ENCODE measurements at regions of chr1 and their contacts with region 1.

Region 1: GRCh38 chr1:245605480-245606161 is 450.8 kb downstream of the KIF26B start:
- DNase-seq: peak; percentile 91
- H3K4me3 ChIP-seq: no peak overlapping the region; a peak in 2 of 4 replicates
- H3K27ac ChIP-seq: peak overlapping the region; percentile 71 to 100
- H3K4me1 ChIP-seq: peaks cover 12 to 78% of the 10 kb centered on the region in 2 experiments; a peak in 3 of 4 replicates
- H3K27me3 ChIP-seq: no peaks in the 10 kb centered on the region
- CTCF ChIP-seq: no peak
- EP300 ChIP-seq: peak; percentile 88 to 89
- RAD21 ChIP-seq: peak; percentile 49

Region 2: DNA sequence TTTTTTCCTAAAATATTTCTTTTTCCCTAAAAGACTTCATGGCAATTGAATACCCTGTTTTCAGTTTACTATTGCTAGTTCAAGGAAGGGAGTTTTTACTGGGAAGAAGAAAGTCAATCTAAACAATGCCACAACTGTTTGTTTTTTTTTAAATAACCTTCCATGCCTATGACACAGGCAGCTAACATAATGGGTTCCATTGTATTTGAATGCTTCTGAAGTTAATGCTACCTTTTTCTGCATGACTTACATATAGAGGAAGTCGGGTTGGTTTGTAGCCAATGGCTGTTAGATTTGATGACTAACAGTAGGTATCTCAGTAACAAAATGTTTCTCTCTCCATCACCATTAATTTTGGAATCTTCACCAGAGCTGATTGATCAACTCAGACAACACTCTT is 316.8 kb before region 1 on chr1:
- CTCF ChIA-PET with region 1: no interaction called
- POLR2A ChIA-PET with region 1: no interaction called
- DNase-seq: no peak
- H3K4me3 ChIP-seq: no peak overlapping the region
- H3K27ac ChIP-seq: no peak overlapping the region
- H3K4me1 ChIP-seq: peaks cover 0 to 29% of the 10 kb centered on the region in 2 experiments; a peak in 2 of 4 replicates
- H3K27me3 ChIP-seq: no peaks in the 10 kb centered on the region
- CTCF ChIP-seq: no peak
- EP300 ChIP-seq: no peak
- RAD21 ChIP-seq: no peak

Region 3: GRCh38 chr1:245512980-245513578 is 92.5 kb before region 1 on chr1:
- CTCF ChIA-PET with region 1: interaction called, 4 read pairs
- POLR2A ChIA-PET with region 1: interaction called, 12 read pairs
- DNase-seq: peak; percentile 78
- H3K4me3 ChIP-seq: peak overlapping the region; percentile 39 to 55
- H3K27ac ChIP-seq: peak overlapping the region; percentile 41 to 92; a peak in 3 of 4 replicates
- H3K4me1 ChIP-seq: peaks cover 0 to 51% of the 10 kb centered on the region in 2 experiments; a peak in 2 of 4 replicates
- H3K27me3 ChIP-seq: no peaks in the 10 kb centered on the region
- CTCF ChIP-seq: peak; percentile 45
- EP300 ChIP-seq: no peak
- RAD21 ChIP-seq: peak; percentile 26

Region 4: DNA sequence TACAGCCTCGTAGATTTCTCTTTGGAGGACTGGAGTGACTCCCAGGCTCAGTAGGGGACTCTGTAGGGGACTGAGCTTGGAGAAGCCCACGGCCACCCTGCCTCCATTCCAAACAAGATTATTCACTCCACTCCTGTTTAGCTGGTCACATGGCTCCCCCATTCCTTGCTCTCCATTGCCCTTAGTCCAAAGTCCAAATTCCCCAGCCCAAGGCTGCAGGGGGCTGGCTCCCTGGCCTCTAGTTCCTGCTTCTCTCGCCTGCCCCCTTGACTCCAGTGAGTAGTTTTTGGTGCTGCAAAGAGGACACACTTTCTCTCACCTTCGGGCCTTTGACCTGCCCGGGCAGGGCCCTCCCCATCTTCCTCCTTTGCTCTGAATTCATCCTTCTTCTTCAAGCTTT is 47.6 kb before region 1 on chr1:
- CTCF ChIA-PET with region 1: no interaction called
- POLR2A ChIA-PET with region 1: no interaction called
- DNase-seq: no peak
- H3K4me3 ChIP-seq: no peak overlapping the region
- H3K27ac ChIP-seq: no peak overlapping the region; a peak in 1 of 4 replicates
- H3K4me1 ChIP-seq: peaks cover 0 to 26% of the 10 kb centered on the region in 2 experiments; a peak in 1 of 4 replicates
- H3K27me3 ChIP-seq: no peaks in the 10 kb centered on the region
- CTCF ChIP-seq: no peak
- EP300 ChIP-seq: no peak
- RAD21 ChIP-seq: no peak

Region 5: GRCh38 chr1:245856944-245857531 is 251.4 kb after region 1 on chr1:
- CTCF ChIA-PET with region 1: no interaction called
- POLR2A ChIA-PET with region 1: no interaction called
- DNase-seq: no peak
- H3K4me3 ChIP-seq: no peak overlapping the region
- H3K27ac ChIP-seq: peak overlapping the region; percentile 64 to 98
- H3K4me1 ChIP-seq: peaks cover 34 to 52% of the 10 kb centered on the region in 2 experiments
- H3K27me3 ChIP-seq: no peaks in the 10 kb centered on the region
- CTCF ChIP-seq: no peak
- EP300 ChIP-seq: no peak
- RAD21 ChIP-seq: no peak